MCF 10A (cell line): ENCODE measurements at regions of chr3 and their contacts with region 1.

Region 1: DNA sequence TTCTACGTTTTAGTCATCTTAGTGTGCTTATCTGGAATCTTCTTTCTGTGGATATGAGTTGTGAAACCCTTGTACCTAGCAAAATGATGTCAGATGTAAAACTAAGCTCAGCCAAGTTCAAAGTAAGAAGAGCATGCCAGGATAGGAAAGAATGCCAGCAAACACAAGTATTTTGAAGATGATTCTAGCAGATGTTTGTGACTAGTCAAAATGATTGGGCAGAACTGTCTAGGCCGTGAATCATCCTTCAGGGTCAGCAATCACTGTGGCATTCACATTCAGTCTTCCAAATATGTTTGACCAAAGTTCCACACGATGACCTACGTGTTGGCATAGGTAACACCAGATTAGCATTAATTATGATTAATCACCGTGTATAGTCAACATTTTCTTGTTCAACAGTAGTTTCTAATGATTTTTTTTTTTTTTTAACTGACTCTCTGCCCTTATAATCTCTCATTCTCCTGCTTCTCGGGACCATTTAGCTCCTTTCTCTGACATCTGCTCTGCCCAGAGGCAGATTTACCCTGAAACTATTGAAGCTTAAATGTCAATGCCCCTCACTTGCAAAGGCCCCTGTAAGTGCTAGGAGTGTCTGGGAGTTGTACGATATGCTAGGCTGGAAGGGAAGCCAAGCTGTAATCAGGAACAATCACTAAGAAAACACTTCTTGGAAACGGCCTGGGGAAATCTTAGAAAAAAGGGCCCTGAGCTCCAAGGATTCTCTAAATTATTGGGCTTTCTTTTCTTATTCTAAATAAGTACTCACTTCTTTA is 5.7 kb upstream of the PLOD2 start:
- DNase-seq: peak; percentile 89
- H3K4me3 Mint-ChIP-seq: peak overlapping the region; percentile 15
- H3K27ac Mint-ChIP-seq: peak overlapping the region; percentile 65
- H3K4me1 Mint-ChIP-seq: peaks cover 46% of the 10 kb centered on the region
- H3K27me3 Mint-ChIP-seq: no peaks in the 10 kb centered on the region
- CTCF ChIP-seq: no peak

Region 2: GRCh38 chr3:146184616-146185015 is 18.0 kb after region 1 on chr3:
- CTCF ChIA-PET with region 1: interaction called, 45 read pairs
- POLR2A ChIA-PET with region 1: interaction called, 26 read pairs
- intact Hi-C with region 1: no loop called
- DNase-seq: peak; percentile 86
- H3K4me3 Mint-ChIP-seq: no peak overlapping the region
- H3K27ac Mint-ChIP-seq: no peak overlapping the region
- H3K4me1 Mint-ChIP-seq: peaks cover 33% of the 10 kb centered on the region
- H3K27me3 Mint-ChIP-seq: no peaks in the 10 kb centered on the region
- CTCF ChIP-seq: no peak